K562 (cell line): ENCODE measurements at regions of chrX and their contacts with region 1.

Region 1: GRCh38 chrX:101348452-101349192 is at the start of gene TIMM8A:
- DNase-seq: peak; percentile 79 to 91 (median 83)
- ATAC-seq: peak; percentile 97
- H3K4me3 ChIP-seq: peak within 1 kb of the TSS; percentile 64
- H3K27ac ChIP-seq: peak within 1 kb of the TSS; percentile 94
- H3K4me1 ChIP-seq: peaks cover 0 to 6% of the 10 kb centered on the region in 2 experiments; a peak in 4 of 5 replicates
- H3K27me3 ChIP-seq: no peaks in the 10 kb centered on the region
- CTCF ChIP-seq: 0 out of 6 replicates have a peak, but pooled peaks of 1 of the 3 experiments have one; percentile 10
- EP300 ChIP-seq: no peak
- POLR2A ChIP-seq: peak; percentile 90
- RAD21 ChIP-seq: no peak
- polyA plus RNA-seq, gene TIMM8A: 132 TPM

Region 2: DNA sequence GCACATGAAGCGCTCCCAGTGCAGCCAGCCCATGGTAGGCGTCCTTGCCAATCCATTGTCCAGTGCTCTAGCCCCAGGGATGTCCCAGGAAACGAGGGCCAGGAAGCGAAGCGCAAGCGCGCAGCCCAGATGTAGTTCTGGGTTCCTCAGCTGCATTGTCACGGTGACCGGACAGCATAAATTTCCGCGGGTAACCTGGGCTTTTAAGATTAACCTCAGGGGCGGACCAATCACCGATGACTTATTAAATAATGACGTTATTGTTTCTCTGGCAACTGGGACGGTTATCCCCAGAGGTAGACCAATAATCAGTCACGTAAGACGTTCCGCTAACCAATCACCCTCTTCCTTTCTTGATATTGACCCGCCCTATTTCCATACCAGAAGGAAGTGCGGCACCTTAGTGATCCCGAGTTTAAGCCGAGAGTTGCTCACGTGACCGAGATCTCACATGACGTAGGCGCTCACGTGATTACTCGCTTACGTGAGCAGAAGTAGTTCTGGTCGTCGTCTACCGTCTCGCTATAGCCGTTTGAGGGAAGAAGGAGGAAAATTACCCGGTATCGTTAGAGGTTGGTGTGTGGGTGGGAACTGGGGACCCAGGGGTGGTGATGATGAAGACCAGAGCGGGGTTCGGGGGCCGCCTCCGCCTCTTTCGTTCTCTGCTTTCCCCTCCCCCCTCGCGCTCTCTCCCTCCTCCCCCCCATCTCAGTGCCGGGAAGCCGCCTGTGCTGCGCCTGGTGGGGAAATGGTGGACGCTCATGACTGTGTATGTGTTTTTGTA is 59.3 kb after region 1 on chrX and contains the starts of genes GLA and HNRNPH2:
- CTCF ChIA-PET with region 1: no interaction called
- POLR2A ChIA-PET with region 1: no interaction called
- in situ Hi-C with region 1: no loop called
- intact Hi-C with region 1: loop called (anchors 5 kb)
- DNase-seq: peak; percentile 88 to 96 (median 92)
- ATAC-seq: peak; percentile 93
- H3K4me3 ChIP-seq: peak within 1 kb of the TSS; percentile 71
- H3K27ac ChIP-seq: peak within 1 kb of the TSS; percentile 97
- H3K4me1 ChIP-seq: no peaks in the 10 kb centered on the region; a peak in 1 of 5 replicates
- H3K27me3 ChIP-seq: no peaks in the 10 kb centered on the region
- CTCF ChIP-seq: peak in 1 of 3 experiments; percentile 23; a peak in 1 of 6 replicates
- EP300 ChIP-seq: peak; percentile 37; the same call in 1 of the 2 replicates
- POLR2A ChIP-seq: peak; percentile 82
- RAD21 ChIP-seq: no peak
- polyA plus RNA-seq, gene GLA: 137 to 146 TPM
- polyA plus RNA-seq, gene HNRNPH2: 60.3 to 130 TPM

Region 3: GRCh38 chrX:101493225-101493624 is 144.6 kb after region 1 on chrX:
- CTCF ChIA-PET with region 1: no interaction called
- POLR2A ChIA-PET with region 1: no interaction called
- in situ Hi-C with region 1: no loop called
- intact Hi-C with region 1: no loop called
- DNase-seq: no peak
- ATAC-seq: no peak
- H3K4me3 ChIP-seq: no peak overlapping the region
- H3K27ac ChIP-seq: no peak overlapping the region
- H3K4me1 ChIP-seq: no peaks in the 10 kb centered on the region
- H3K27me3 ChIP-seq: no peaks in the 10 kb centered on the region
- CTCF ChIP-seq: no peak
- EP300 ChIP-seq: no peak
- POLR2A ChIP-seq: no peak
- RAD21 ChIP-seq: no peak